ENCODE measurements at regions of chr16 and their contacts with region 1.

Region 1: GRCh38 chr16:56425439-56425832 is at the start of gene AMFR:
- DNase-seq: peak; percentile 91
- H3K4me3 ChIP-seq: peak within 1 kb of the TSS; percentile 88
- H3K27ac ChIP-seq: peak within 1 kb of the TSS; percentile 72
- H3K4me1 ChIP-seq: peaks cover 40% of the 10 kb centered on the region
- CTCF ChIP-seq: peak; percentile 49; the same call in 1 of the 2 replicates
- total RNA-seq, gene AMFR: 87.7 and 108 TPM in 2 replicates

Region 2: GRCh38 chr16:56281256-56281805 is 144.1 kb before region 1 on chr16:
- CTCF ChIA-PET with region 1: no interaction called
- POLR2A ChIA-PET with region 1: no interaction called
- intact Hi-C with region 1: no loop called
- DNase-seq: no peak
- H3K4me3 ChIP-seq: no peak overlapping the region
- H3K27ac ChIP-seq: no peak overlapping the region
- H3K4me1 ChIP-seq: peaks cover 9% of the 10 kb centered on the region
- CTCF ChIP-seq: peak; percentile 60

Region 3: DNA sequence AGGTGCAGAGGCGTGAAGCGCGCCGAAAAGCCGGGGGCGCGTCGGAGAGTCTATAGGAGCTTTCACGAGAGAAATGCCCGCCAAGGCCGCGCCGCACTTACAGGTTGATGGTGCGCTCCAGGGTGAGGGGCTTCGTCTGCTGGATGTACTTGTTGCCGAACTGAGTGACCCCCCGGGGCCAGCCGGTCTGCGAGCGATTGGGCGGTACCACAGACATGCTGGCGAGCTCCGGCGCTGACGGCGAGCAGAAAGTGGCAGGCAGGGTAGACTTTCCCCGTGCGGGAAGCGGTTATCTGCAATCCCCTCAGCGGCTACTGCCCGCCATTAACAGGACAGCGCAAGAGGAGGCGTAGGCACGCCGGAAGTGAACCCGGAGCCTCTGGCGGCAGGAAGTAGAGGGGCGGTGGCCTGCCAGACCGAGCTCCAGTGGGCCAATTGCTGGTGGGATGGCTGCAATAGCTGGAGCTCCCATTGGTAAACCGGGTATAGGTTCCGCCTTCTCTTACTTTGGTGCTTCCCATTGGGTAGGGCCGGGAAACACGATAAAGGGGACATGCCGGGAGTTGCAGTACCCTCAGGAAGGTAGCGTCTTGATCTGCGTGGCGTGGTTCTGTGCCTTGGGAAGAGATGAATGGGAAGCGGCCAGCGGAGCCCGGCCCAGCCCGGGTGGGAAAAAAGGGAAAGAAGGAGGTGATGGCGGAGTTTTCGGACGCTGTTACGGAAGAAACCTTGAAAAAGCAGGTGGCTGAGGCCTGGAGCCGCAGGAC is 25.7 kb after region 1 on chr16 and contains the starts of genes NUDT21 and OGFOD1:
- CTCF ChIA-PET with region 1: no interaction called
- POLR2A ChIA-PET with region 1: interaction called, 8 read pairs
- intact Hi-C with region 1: loop called (anchors 2 kb)
- DNase-seq: peak; percentile 97
- H3K4me3 ChIP-seq: peak within 1 kb of the TSS; percentile 89
- H3K27ac ChIP-seq: peak within 1 kb of the TSS; percentile 78
- H3K4me1 ChIP-seq: peaks cover 28% of the 10 kb centered on the region
- CTCF ChIP-seq: no peak
- total RNA-seq, gene NUDT21: 123 and 229 TPM in 2 replicates
- total RNA-seq, gene OGFOD1: 35.1 and 78.7 TPM in 2 replicates